ENCODE measurements at regions of chr10 and their contacts with region 1.

Region 1: GRCh38 chr10:99926925-99927720 is 82.6 kb downstream of the DNMBP start:
- DNase-seq: peak; percentile 15
- ATAC-seq: no peak
- H3K4me3 ChIP-seq: peak overlapping the region; percentile 65 to 69 (median 68)
- H3K27ac ChIP-seq: peak overlapping the region; percentile 71
- H3K4me1 ChIP-seq: peaks cover 79% of the 10 kb centered on the region
- H3K27me3 ChIP-seq: no peaks in the 10 kb centered on the region; a peak in 1 of 5 replicates
- CTCF ChIP-seq: no peak
- EP300 ChIP-seq: no peak
- POLR2A ChIP-seq: no peak
- RAD21 ChIP-seq: no peak

Region 2: DNA sequence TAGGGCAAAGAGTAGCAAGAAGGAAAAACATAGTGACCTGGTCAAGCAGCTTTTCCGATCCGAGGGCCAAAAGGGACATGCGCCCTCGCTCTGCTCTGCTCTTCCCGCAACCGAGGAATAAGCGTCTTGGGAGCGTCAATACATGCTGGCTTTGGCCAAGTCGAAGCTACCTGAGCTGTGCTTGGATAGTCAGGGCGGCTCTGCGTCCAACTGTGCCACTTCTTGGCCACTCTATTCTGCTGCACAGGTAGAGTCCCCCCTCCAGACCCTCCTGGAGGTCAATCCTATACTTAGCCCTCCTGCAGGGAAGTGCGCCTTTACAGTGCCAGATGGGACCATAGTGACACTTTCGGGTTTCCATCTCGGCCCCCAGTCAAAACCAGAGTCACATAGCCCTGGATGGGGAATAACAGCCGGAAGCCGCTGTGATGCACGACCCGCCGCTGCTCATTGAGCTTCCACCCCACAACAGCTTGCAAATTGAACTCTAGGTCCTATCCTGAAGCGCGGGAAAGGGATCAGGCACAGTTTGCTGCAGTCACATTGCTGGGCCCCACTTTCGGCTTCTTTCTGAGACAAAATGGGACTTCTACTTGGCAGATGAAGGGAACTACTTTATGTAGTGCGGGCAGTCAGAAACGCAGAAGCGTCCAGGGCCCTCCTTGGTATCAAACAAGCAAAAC is 690.4 kb before region 1 on chr10:
- CTCF ChIA-PET with region 1: no interaction called
- POLR2A ChIA-PET with region 1: no interaction called
- in situ Hi-C with region 1: no loop called
- intact Hi-C with region 1: no loop called
- DNase-seq: no peak
- ATAC-seq: no peak
- H3K4me3 ChIP-seq: no peak overlapping the region
- H3K27ac ChIP-seq: no peak overlapping the region
- H3K4me1 ChIP-seq: no peaks in the 10 kb centered on the region
- H3K27me3 ChIP-seq: peaks cover 8 to 57% of the 10 kb centered on the region in 2 experiments
- CTCF ChIP-seq: no peak
- EP300 ChIP-seq: no peak
- POLR2A ChIP-seq: no peak
- RAD21 ChIP-seq: no peak

Region 3: GRCh38 chr10:99945263-99945662 is 18.1 kb after region 1 on chr10:
- CTCF ChIA-PET with region 1: no interaction called
- POLR2A ChIA-PET with region 1: interaction called, 11 read pairs
- in situ Hi-C with region 1: no loop called
- intact Hi-C with region 1: no loop called
- DNase-seq: no peak
- ATAC-seq: no peak
- H3K4me3 ChIP-seq: no peak overlapping the region
- H3K27ac ChIP-seq: no peak overlapping the region
- H3K4me1 ChIP-seq: peaks cover 7% of the 10 kb centered on the region
- H3K27me3 ChIP-seq: no peaks in the 10 kb centered on the region
- CTCF ChIP-seq: no peak
- EP300 ChIP-seq: no peak
- POLR2A ChIP-seq: no peak
- RAD21 ChIP-seq: no peak

Region 4: GRCh38 chr10:99993701-99994689 is 66.9 kb after region 1 on chr10:
- CTCF ChIA-PET with region 1: no interaction called
- POLR2A ChIA-PET with region 1: no interaction called
- in situ Hi-C with region 1: no loop called
- intact Hi-C with region 1: no loop called
- DNase-seq: no peak
- ATAC-seq: no peak
- H3K4me3 ChIP-seq: no peak overlapping the region
- H3K27ac ChIP-seq: no peak overlapping the region
- H3K4me1 ChIP-seq: peaks cover 9% of the 10 kb centered on the region
- H3K27me3 ChIP-seq: no peaks in the 10 kb centered on the region
- CTCF ChIP-seq: no peak
- EP300 ChIP-seq: no peak
- POLR2A ChIP-seq: no peak
- RAD21 ChIP-seq: no peak

Measured in HepG2 (cell line).